ENCODE measurements at regions of chr1 and their contacts with region 1.

Region 1: GRCh38 chr1:37931361-37932158 is 15.3 kb downstream of the INPP5B start:
- DNase-seq: peak; percentile 95 to 99
- H3K4me3 ChIP-seq: peak overlapping the region; percentile 72 to 80
- H3K27ac ChIP-seq: peak overlapping the region; percentile 65 to 74
- H3K4me1 ChIP-seq: peaks cover 0 to 35% (median 21%) of the 10 kb centered on the region in 4 donors
- H3K27me3 ChIP-seq: no peaks in the 10 kb centered on the region
- CTCF ChIP-seq: peak in 1 of 2 experiments; percentile 19

Region 2: GRCh38 chr1:37890378-37891014 is 41.1 kb before region 1 on chr1:
- intact Hi-C with region 1: loop called (anchors 5 kb)
- DNase-seq: no peak
- H3K4me3 ChIP-seq: no peak overlapping the region
- H3K27ac ChIP-seq: peak overlapping the region; percentile 48 to 63
- H3K4me1 ChIP-seq: peaks cover 0 to 9% (median 0%) of the 10 kb centered on the region in 4 donors
- H3K27me3 ChIP-seq: no peaks in the 10 kb centered on the region
- CTCF ChIP-seq: peak; percentile 56

Measured in tibial artery (tissue), 4 donors.